ENCODE measurements at regions of chr5 and their contacts with region 1.

Region 1: GRCh38 chr5:131634996-131635754 is at the start of gene RAPGEF6:
- DNase-seq: peak; percentile 99
- ATAC-seq: peak; percentile 91
- H3K4me3 Mint-ChIP-seq: peak within 1 kb of the TSS; percentile 87
- H3K27ac Mint-ChIP-seq: peak within 1 kb of the TSS; percentile 98
- H3K4me1 Mint-ChIP-seq: peaks cover 28% of the 10 kb centered on the region
- H3K27me3 Mint-ChIP-seq: no peaks in the 10 kb centered on the region
- total RNA-seq, gene RAPGEF6: 36.4 to 40.9 TPM

Region 2: DNA sequence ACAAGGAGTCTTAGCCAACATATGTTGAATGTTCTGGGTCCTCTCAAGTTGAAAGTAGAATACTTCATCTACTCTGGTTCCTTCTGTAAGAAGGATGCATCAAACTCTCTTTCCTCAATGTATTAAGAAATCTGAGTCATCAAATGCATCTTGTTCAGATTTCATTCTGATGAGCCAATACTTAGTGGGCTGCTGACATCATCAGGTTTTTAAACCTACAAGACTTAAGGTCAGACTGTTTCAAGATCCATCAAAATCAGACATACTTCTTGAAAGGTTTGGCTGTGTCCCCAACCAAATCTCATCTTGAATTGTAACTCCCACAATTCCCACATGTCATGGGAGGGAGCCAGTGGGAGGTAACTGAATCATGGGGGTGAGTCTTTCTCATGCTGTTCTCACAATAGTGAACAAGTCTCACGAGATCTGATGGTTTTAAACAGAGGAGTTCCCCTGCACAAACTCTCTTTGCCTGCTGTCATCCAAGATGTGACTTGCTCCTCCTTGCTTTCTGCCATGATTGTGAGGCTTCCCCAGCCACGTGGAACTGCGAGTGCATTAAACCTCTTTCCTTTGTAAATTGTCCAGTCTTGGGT is 168.9 kb before region 1 on chr5:
- CTCF ChIA-PET with region 1: no interaction called
- POLR2A ChIA-PET with region 1: no interaction called
- DNase-seq: no peak
- ATAC-seq: no peak
- H3K4me3 Mint-ChIP-seq: no peak overlapping the region
- H3K27ac Mint-ChIP-seq: no peak overlapping the region
- H3K4me1 Mint-ChIP-seq: peaks cover 17% of the 10 kb centered on the region
- H3K27me3 Mint-ChIP-seq: no peaks in the 10 kb centered on the region

Region 3: GRCh38 chr5:131706281-131706680 is 71.1 kb after region 1 on chr5:
- CTCF ChIA-PET with region 1: no interaction called
- POLR2A ChIA-PET with region 1: no interaction called
- DNase-seq: no peak
- ATAC-seq: no peak
- H3K4me3 Mint-ChIP-seq: no peak overlapping the region
- H3K27ac Mint-ChIP-seq: no peak overlapping the region
- H3K4me1 Mint-ChIP-seq: no peaks in the 10 kb centered on the region
- H3K27me3 Mint-ChIP-seq: no peaks in the 10 kb centered on the region

Region 4: DNA sequence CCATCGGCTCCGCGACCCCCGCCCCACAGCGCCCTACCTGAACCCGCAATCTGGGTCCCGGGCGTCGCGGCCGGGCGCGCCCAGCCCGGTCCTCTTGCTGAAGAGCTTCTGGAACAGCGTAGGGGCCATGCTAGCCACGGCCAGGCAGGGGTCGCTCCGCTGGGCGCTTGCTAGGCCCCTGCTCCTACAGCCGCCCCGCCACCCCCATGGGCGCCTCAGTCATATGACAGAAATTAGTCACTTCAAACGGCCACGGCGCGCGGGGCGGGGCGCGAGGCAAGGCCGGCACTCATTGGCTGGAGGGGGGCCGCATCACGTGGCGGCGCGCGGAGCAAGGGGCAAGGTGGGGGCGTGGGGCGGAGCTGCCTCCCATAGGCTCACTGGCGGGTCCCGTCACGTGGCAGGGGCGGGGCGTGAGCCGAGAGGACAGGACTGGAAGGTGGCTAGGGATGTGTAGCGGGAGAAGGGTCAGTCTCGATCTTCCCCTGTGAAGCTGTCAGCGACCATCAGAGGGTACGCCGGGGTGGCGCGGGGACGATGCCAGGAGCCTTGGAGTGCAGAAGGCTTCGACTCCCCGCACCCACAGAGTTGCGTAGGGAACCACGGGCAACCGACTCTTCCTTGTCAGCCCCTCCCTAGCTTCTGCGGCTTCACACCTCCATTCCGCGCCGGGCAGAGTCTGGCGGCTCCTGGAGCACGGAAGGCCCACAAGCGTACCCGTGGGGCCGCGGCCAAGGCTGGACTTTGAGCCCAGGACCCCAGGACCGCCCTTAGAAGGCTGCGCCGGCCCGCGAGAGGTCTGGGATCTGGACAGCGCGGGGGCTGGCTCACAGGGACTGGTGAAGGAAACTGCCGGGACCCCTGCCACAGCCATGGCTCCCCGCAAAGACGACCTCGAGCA is 161.9 kb after region 1 on chr5 and contains the start of gene FNIP1:
- CTCF ChIA-PET with region 1: no interaction called
- POLR2A ChIA-PET with region 1: interaction called, 14 read pairs
- DNase-seq: peak; percentile 99
- ATAC-seq: peak; percentile 96
- H3K4me3 Mint-ChIP-seq: peak within 1 kb of the TSS; percentile 91
- H3K27ac Mint-ChIP-seq: peak within 1 kb of the TSS; percentile 90
- H3K4me1 Mint-ChIP-seq: peaks cover 31% of the 10 kb centered on the region
- H3K27me3 Mint-ChIP-seq: peaks cover 8% of the 10 kb centered on the region
- total RNA-seq, gene FNIP1: 25.5 to 26.7 TPM

Measured in activated CD8-positive, alpha-beta T cell treated with anti-CD3 and anti-CD28 coated beads, Interleukin-2, amount 10 ng/mL, durations not matched to agents 7 days and 5 days (primary cell).